Left ventricle myocardium superior (tissue), 1 donor: ENCODE measurements at regions of chr3 and their contacts with region 1.

Region 1: GRCh38 chr3:30693470-30694120 is 87.2 kb downstream of the TGFBR2 start:
- DNase-seq: peak; percentile 38
- ATAC-seq: peak; percentile 72

Region 2: GRCh38 chr3:30112902-30113484 is 580.6 kb before region 1 on chr3:
- intact Hi-C with region 1: loop called (anchors 10 kb)
- DNase-seq: no peak
- ATAC-seq: peak; percentile 29

Region 3: DNA sequence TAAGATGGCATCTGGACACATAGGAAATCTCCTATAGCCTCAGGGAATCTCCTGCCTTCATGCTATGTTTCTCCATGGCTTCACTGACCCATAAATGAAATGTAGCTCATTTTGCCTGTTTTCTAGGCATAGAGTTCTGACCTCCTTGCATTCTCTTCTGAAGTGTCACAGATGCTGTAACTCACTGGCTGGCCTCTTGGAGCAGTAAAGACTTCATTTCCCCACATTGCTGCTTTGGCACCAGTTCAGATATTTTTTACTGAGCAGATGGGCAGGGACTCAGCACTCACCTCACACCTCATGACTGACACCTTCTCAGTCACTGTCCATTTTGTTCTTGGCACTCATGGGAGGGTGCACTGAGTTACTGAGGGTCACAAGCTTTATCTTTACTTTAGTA is 373.9 kb before region 1 on chr3:
- intact Hi-C with region 1: loop called (anchors 10 kb)
- DNase-seq: peak; percentile 30
- ATAC-seq: peak; percentile 73

Region 4: DNA sequence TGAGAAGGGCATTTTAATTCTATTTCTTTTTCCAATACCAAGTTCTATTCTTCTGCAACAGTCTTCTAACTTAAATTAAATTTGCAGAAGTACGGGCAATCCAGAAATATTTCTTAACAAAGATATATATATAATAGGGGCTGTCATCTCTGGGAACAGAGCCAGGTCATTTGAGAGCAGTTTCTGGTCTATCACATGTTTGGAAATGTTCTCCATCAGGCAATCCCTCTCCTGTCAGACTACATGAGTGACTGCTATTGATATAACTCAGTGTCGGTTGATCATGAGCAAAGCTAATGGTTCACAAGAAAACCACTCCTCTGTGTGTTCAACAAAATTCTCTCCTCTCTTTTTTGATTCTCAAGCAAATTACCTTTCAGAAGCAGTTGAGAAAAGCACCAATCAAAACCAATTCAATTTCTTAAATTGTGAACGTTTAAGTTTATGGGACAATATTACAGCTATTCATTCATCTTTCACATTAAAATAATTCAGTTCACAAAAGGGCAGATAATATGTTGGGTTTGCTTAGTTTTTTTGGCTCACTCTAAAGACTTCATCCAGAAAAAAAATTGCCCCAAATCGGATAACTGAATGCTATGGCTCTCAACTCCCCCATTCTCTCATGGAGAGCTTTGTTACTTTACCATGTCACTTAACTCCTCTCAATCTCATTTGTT is 240.1 kb before region 1 on chr3:
- intact Hi-C with region 1: loop called (anchors 10 kb)
- DNase-seq: no peak
- ATAC-seq: peak; percentile 80